ENCODE measurements at regions of chr9 and their contacts with region 1.

Region 1: DNA sequence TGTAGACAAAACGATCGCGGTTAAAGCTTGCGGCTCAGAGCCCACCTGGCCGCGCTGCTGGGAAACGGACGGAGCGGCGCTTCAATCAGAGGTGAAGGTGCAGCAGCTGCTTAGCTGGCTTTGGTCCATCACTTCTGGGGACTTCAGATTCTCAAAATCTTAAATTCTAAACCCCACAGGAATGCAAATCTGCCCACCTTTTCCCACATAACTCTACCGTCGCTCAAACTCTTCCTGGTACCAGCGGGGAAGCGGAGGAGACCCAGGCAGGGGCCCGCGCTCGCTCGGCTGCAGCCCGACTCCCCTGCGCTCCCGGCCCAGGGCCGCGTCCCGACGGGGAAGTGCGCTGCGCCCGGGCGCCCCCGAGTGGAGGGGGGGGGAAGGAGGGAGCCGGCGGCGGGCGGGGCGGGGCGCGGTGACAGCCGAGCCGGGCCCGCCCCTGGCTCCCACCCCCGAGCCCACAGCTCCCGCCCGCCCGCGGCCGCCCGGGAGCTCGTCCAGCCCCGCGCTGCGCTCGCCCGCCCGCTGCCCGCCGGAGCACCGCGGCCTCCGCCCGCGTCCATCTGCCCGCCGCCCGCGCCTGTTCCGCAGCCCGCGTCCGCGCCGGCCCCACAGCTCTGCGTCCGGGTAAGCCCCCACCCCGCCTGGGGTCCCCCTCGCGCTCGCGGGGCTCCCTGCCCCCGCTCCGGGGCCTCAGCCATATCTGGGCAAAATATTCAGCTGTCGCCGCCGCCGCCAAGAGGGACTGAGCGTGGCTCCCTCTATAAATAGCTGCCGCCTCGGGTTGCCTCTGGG is at the start of gene TMOD1:
- DNase-seq: peak; percentile 73 to 93
- ATAC-seq: peak; percentile 77
- H3K4me3 ChIP-seq: peak within 1 kb of the TSS; percentile 71 to 100
- H3K27ac ChIP-seq: peak within 1 kb of the TSS; percentile 3 to 52
- H3K4me1 ChIP-seq: peaks cover 0 to 5% of the 10 kb centered on the region in 2 donors
- H3K27me3 ChIP-seq: no peaks in the 10 kb centered on the region
- total RNA-seq, gene TMOD1: 24.5 to 56.6 TPM

Region 2: GRCh38 chr9:97468658-97469448 is 32.5 kb before region 1 on chr9:
- intact Hi-C with region 1: no loop called
- DNase-seq: peak; percentile 74 to 88
- ATAC-seq: peak; percentile 97
- H3K4me3 ChIP-seq: no peak overlapping the region
- H3K27ac ChIP-seq: peak overlapping the region in 1 of 2 donors; percentile 69
- H3K4me1 ChIP-seq: peaks cover 0 to 2% of the 10 kb centered on the region in 2 donors
- H3K27me3 ChIP-seq: no peaks in the 10 kb centered on the region

Region 3: DNA sequence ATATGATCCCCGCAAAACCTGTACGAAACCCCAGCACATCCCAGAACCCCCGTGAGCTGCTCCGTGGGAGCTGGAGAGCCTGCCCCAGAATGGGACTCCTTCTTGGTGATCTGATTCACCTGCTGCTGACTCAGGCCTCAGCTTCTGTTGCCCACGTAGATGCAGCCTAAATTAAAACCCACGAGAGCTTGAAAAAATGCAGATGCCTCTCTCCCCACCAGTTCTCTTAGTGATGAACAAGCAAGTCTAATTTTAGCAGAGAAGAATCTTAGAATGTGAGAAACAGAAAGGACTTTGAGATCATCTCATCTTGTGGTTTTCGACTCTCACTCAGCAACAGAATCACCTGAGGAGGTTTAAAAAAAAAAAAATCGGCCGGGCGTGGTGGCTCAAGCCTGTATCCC is 57.7 kb after region 1 on chr9:
- intact Hi-C with region 1: loop called (anchors 2 kb)
- DNase-seq: no peak
- ATAC-seq: no peak
- H3K4me3 ChIP-seq: no peak overlapping the region
- H3K27ac ChIP-seq: peak overlapping the region in 1 of 2 donors; percentile 35
- H3K4me1 ChIP-seq: peaks cover 0 to 7% of the 10 kb centered on the region in 2 donors
- H3K27me3 ChIP-seq: no peaks in the 10 kb centered on the region

Measured in aorta (tissue), 5 donors.